GM13977 (cell line): ENCODE measurements at regions of chr18 and their contacts with region 1.

Region 1: GRCh38 chr18:5841518-5841917 is 53.8 kb downstream of the TMEM200C start:
- DNase-seq: no peak
- CTCF ChIP-seq: no peak

Region 2: DNA sequence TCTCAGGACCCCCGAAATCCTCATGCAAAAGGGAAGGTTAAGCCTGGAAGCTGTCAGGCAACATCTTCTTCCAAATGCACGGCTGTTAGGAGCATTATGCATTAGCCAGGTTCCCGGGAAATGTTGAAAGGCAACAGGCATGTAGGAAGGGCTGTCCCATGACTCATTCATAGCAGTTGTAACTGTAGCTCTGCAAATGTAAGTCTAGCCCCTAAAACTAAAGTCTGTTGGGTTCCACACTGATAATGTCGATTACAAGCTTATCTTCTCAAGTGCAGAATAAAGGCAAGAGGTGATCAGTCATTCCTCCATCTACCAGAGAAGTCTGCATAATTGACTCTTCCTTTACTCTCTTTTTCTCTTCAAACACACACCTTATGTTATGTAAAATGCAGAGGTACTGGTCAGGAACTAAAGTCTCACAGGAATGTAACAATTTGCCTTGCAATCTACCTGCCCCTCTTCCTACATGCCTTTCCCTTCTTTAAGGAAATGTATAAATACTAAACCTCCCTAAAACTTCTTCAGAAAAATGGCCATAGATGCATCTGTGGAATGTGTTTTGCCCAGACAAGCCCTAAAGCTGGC is 744.3 kb before region 1 on chr18:
- in situ Hi-C with region 1: loop called (anchors 25 kb)
- DNase-seq: no peak
- CTCF ChIP-seq: no peak